ENCODE measurements at regions of chr9 and their contacts with region 1.

Region 1: DNA sequence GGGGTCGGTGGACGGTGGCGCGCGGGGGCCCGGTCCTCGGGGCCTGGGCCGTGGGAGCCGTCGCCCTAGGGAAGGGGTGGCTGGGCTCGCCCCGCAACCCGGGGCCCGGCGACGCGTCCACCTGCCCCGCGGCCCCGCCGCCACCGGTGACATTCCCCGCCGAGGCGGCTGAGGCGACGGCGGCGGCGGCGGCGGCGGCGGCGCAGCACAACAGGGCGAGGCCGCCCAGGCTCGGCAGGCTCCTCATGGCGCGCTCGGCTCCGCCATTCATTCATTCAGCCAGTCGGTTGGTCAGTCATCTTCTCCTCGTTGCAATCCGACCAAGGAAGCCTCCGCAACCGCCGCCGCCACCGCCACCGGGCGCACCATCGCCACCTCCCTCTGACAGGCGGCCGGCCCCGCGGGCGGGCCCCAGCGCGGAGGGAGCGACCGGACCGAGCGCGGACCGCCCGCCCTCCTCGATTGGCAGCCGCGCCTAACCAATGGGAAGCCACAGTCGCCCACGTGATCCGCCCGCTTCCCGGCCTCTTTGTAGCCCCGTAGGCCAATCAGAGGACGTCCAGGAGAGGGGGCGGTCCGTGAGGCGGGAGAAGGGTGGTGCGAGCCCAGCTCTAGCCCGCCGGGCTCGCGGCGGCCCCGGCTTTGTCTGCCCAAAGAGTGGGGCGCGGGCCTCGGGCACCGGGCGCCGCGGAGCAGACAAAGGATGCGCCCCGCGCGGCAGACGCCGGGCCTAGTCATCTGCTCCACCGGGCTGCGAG is at the start of gene MEGF9:
- DNase-seq: peak; percentile 99
- ATAC-seq: peak; percentile 97
- H3K4me3 ChIP-seq: peak within 1 kb of the TSS; percentile 69 to 76
- H3K27ac ChIP-seq: peak within 1 kb of the TSS in 1 of 2 donors; percentile 53
- H3K4me1 ChIP-seq: peaks cover 3 to 5% of the 10 kb centered on the region in 2 donors
- H3K27me3 ChIP-seq: no peaks in the 10 kb centered on the region
- total RNA-seq, gene MEGF9: 15.7 to 21.5 TPM

Region 2: DNA sequence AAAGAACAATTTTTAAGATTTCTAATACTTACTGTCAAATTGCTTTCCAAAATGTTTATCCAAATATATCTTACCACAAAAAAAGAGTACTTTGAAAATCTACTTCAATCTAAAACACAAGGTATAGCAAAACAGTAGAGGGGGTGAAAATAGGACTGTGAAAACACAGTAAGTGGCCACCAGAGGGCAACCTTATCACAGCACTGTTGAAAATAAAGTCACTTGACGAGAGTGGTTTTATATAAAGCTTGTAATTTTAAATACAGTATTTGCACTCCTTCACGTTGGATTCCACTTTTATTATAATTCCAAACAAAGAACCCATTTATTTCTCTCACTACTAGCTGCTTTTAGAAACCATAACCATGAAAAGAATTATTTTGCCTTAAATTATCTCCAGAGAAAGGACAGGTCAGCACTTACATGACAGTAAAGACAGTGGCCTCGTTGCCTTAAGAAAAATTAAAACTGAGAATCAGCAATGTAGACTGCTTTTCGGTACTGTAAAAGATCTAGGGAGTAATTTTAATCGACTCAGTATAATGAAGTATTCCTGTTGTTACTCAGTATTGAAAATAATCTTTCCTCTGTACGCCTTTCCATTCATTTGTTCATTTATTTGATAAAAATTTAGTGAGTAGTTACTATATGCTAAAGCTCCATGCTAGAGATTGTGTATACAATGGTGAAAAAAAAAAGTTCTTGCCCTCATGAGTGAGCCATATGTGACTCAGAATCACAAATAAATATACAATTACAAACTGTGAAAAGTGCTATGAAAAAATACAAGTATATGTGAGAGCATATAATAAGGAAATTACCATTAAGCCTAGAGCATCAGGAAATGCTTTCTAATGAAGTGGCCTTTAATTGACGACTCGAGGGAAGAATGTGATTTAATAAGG is 94.3 kb before region 1 on chr9:
- intact Hi-C with region 1: loop called in 1 of 2 experiments (anchors 10 kb)
- DNase-seq: no peak
- ATAC-seq: peak; percentile 70
- H3K4me3 ChIP-seq: no peak overlapping the region
- H3K27ac ChIP-seq: no peak overlapping the region
- H3K4me1 ChIP-seq: no peaks in the 10 kb centered on the region
- H3K27me3 ChIP-seq: no peaks in the 10 kb centered on the region

Region 3: DNA sequence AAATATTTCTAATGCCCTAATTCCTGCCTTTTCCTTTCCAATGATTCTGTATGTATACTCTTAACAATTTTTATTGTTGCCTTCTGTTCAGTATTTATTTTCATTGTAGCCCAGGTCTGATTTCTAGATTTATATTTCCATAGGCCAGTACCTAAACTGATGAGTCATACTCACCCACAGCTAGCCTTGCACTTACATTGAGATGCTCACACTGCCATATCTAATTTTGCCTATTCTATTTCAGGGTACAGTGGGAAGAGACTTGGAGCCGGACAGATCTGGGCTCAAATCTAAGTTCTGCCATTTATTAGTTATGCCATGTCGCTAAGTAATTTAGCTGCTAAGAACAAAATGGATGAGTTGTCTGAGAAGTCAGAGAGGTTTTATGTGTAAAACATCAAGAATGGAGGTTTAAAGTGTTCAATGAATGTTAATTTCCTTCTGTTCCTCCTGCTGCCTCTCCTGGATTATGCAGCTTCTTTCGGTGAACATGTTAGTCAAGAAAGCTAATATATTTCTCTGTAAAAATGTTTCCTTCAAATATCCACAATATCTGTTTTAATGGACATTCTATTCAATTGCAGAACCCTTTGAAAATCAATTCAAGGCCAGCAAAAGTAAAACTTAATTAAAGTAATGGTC is 72.0 kb before region 1 on chr9:
- intact Hi-C with region 1: no loop called
- DNase-seq: no peak
- ATAC-seq: no peak
- H3K4me3 ChIP-seq: no peak overlapping the region
- H3K27ac ChIP-seq: no peak overlapping the region
- H3K4me1 ChIP-seq: no peaks in the 10 kb centered on the region
- H3K27me3 ChIP-seq: no peaks in the 10 kb centered on the region

Region 4: GRCh38 chr9:120676767-120677402 is 37.4 kb before region 1 on chr9:
- intact Hi-C with region 1: no loop called
- DNase-seq: no peak
- ATAC-seq: no peak
- H3K4me3 ChIP-seq: no peak overlapping the region
- H3K27ac ChIP-seq: no peak overlapping the region
- H3K4me1 ChIP-seq: no peaks in the 10 kb centered on the region
- H3K27me3 ChIP-seq: no peaks in the 10 kb centered on the region

Region 5: DNA sequence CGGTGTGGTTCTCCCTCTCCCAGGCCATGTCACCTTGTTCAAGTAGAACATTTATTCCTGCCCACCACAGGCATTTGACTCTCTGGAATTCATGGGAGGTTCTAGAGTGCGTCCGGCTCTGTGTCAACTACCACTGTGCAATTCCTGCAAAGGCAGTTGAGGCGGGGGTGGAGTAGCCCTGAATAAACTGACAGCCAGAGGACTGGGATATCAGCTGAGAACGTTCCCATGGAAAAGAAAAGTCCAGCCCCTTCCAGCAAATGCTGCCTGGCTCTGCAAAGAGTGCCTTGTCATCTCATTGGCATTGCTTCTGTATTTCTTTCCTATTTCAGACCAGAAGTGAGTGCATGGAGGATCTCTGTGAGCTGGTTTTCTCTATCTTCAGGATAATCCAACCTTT is 18.9 kb after region 1 on chr9:
- intact Hi-C with region 1: loop called in 1 of 2 experiments (anchors 1 kb)
- DNase-seq: peak; percentile 80 to 87
- ATAC-seq: peak; percentile 79
- H3K4me3 ChIP-seq: no peak overlapping the region
- H3K27ac ChIP-seq: no peak overlapping the region
- H3K4me1 ChIP-seq: no peaks in the 10 kb centered on the region
- H3K27me3 ChIP-seq: no peaks in the 10 kb centered on the region

Measured in aorta (tissue), 5 donors.